ENCODE measurements at regions of chr4 and their contacts with region 1.

Region 1: DNA sequence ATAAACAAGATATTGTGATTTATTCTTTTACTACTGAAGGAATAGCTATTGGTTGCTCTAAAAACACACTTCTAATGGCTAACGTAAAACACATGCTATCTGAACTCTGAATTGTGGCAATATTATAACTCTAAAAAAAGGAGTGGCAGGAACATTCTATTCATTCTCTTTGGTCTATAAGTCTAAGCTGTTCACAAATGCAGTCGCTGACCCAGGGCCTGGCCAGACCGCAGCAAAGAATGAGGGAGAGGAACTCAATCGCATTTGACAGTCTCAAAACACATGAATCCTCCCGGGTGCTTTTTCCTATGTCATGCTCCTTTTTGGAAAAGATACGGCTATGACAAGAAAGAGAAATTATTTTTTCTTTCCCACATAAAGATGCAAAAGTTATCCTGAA is 651.6 kb upstream of the PITX2 start:
- DNase-seq: no peak
- H3K4me3 ChIP-seq: no peak overlapping the region
- H3K27ac ChIP-seq: no peak overlapping the region
- H3K4me1 ChIP-seq: no peaks in the 10 kb centered on the region
- H3K27me3 ChIP-seq: no peaks in the 10 kb centered on the region
- CTCF ChIP-seq: no peak

Region 2: GRCh38 chr4:111602848-111603247 is 328.4 kb after region 1 on chr4:
- CTCF ChIA-PET with region 1: no interaction called
- POLR2A ChIA-PET with region 1: no interaction called
- intact Hi-C with region 1: loop called (anchors 10 kb)
- DNase-seq: peak; percentile 10
- H3K4me3 ChIP-seq: no peak overlapping the region
- H3K27ac ChIP-seq: no peak overlapping the region
- H3K4me1 ChIP-seq: peaks cover 14% of the 10 kb centered on the region
- H3K27me3 ChIP-seq: no peaks in the 10 kb centered on the region
- CTCF ChIP-seq: peak; percentile 45

Measured in A673 (cell line).